Activated CD4-positive, alpha-beta memory T cell treated with anti-CD3 and anti-CD28 coated beads, Interleukin-2, amount 10 ng/mL, durations not matched to agents 7 days and 5 days (primary cell): ENCODE measurements at regions of chr1 and their contacts with region 1.

Region 1: DNA sequence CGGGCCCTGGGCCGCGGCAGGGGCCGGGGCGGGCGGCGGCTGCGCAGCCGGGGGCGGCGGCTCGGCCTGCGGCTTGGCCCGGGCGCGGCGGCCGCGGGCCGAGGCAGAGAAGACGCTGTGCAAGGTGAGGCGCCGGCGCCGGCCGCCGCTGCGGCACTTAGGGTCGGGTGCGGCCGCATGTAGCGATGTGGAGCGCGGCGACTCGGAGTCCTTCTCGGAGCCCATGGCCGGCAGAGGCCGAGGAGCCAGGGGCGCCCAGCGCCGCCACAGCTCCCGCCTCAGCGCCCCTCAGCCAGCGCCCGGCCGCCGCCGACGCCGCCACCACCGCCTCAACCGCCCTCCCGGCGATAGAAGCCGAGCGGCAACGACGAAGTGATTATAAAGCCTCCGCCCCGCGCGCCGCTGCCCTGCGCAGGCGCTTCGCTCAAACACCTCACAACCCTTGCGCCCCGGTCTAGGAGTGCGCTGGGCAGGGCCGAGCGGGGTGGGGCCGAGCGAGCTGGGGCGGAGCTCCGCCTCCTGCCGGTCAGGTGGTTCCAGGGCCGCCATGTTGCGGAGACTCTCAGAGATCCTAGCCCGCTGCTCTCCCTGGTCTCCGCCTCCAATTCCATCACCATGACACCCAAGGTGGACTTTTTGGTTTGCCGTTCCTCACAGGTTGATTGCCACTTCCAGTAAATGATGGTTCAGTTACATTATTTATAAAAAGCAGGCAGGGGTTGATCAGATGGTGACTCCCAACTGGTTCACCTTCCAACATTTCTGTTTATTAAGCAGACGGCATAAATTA is at the start of gene RNF19B:
- DNase-seq: peak; percentile 96
- H3K4me3 Mint-ChIP-seq: peak within 1 kb of the TSS; percentile 79
- H3K27ac Mint-ChIP-seq: peak within 1 kb of the TSS; percentile 85
- H3K4me1 Mint-ChIP-seq: peaks cover 60% of the 10 kb centered on the region
- H3K27me3 Mint-ChIP-seq: peaks cover 3% of the 10 kb centered on the region
- total RNA-seq, gene RNF19B: 42.9 to 46.9 TPM

Region 2: DNA sequence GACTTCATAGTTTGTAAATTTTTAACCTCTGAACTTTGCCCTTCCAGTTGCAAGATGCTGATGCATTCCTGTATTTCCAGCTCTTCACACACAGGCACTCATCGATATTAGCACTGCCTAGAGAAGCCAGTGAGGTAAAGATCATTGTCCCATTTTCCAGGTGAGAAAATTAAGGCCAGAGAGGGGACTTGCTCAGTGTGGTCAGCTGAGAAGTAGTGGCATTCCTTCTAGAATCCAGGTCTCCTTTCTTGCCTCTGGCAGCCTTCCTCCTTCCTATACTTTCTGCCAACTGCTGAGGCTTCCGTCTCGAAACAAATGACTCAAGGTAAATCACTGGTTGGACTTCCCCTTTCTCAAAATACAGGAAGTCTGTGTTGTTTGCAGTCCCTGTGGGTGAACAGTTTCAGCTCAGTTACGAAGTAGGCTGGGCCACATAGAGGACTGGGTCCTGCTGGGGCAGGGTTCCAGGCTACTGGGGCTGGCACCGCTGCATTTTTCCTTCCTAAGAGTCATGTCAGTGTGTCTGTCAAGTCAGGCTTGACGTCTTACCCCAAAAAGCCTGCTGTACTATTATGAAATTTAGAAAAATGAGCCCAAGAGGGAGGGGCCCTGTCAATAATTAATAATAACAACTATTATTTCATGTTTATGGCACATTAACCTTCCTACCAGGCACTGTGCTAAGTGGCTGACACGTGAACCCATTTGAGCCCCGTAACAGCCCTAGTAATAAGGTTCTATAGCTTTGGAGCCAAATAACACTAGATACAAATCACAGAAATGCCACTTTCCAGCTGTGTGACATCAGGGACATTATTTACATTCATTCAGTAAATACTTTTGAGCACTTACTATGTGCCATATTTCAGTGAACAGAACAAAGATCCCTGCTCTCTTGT is 16.6 kb after region 1 on chr1:
- CTCF ChIA-PET with region 1: interaction called, 10 read pairs
- POLR2A ChIA-PET with region 1: interaction called, 46 read pairs
- DNase-seq: peak; percentile 73
- H3K4me3 Mint-ChIP-seq: peak overlapping the region; percentile 56
- H3K27ac Mint-ChIP-seq: peak overlapping the region; percentile 87
- H3K4me1 Mint-ChIP-seq: peaks cover 67% of the 10 kb centered on the region
- H3K27me3 Mint-ChIP-seq: no peaks in the 10 kb centered on the region

Region 3: GRCh38 chr1:33036526-33037503 is 72.2 kb after region 1 on chr1 and contains the start of gene AK2:
- CTCF ChIA-PET with region 1: no interaction called
- POLR2A ChIA-PET with region 1: no interaction called
- DNase-seq: peak; percentile 94
- H3K4me3 Mint-ChIP-seq: peak within 1 kb of the TSS; percentile 91
- H3K27ac Mint-ChIP-seq: peak within 1 kb of the TSS; percentile 78
- H3K4me1 Mint-ChIP-seq: peaks cover 50% of the 10 kb centered on the region
- H3K27me3 Mint-ChIP-seq: no peaks in the 10 kb centered on the region
- total RNA-seq, gene AK2: 189 to 192 TPM